Activated CD4-positive, alpha-beta memory T cell treated with anti-CD3 and anti-CD28 coated beads, Interleukin-2, amount 10 ng/mL, durations not matched to agents 7 days and 5 days (primary cell): ENCODE measurements at regions of chr7 and their contacts with region 1.

Region 1: DNA sequence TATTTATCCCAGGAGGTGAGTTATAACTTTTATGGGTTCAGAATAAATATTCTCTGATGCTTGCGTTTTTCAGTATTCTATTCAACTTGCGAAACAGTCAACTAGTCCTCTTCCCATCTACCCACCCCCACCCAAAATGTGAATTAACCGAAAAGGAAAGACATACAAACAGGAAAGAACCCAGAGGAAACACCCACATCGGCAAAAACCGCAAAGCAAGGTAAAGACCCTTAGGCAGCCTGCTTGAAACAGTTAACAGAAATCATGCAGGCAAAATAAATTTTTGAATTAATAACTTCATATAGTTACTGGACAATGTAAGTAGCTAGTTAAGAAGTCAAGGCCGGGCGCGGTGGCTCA is 5.4 kb downstream of the ZC3HAV1 start:
- DNase-seq: peak; percentile 54
- H3K4me3 Mint-ChIP-seq: peak overlapping the region; percentile 92
- H3K27ac Mint-ChIP-seq: peak overlapping the region; percentile 90
- H3K4me1 Mint-ChIP-seq: peaks cover 24% of the 10 kb centered on the region
- H3K27me3 Mint-ChIP-seq: no peaks in the 10 kb centered on the region

Region 2: DNA sequence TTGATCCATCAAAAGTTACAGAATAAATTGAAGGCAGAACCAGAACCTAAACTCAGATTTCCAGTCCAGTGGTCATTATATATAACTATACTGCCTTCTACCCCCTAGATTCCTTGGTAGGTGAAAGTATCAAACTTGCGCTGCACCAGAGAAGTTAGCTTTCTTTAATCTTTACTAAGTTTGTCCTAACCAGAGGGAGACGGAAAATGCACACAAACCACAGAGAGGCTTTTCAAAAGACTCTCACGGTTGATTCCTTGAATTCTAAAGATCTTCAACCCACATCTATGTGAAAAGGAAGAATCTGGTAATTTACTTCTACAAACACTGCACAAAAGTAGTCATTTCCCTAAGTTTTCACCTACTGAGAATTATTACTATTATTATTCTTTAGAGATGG is 104.7 kb before region 1 on chr7:
- CTCF ChIA-PET with region 1: no interaction called
- POLR2A ChIA-PET with region 1: no interaction called
- DNase-seq: no peak
- H3K4me3 Mint-ChIP-seq: no peak overlapping the region
- H3K27ac Mint-ChIP-seq: no peak overlapping the region
- H3K4me1 Mint-ChIP-seq: peaks cover 5% of the 10 kb centered on the region
- H3K27me3 Mint-ChIP-seq: peaks cover 28% of the 10 kb centered on the region

Region 3: DNA sequence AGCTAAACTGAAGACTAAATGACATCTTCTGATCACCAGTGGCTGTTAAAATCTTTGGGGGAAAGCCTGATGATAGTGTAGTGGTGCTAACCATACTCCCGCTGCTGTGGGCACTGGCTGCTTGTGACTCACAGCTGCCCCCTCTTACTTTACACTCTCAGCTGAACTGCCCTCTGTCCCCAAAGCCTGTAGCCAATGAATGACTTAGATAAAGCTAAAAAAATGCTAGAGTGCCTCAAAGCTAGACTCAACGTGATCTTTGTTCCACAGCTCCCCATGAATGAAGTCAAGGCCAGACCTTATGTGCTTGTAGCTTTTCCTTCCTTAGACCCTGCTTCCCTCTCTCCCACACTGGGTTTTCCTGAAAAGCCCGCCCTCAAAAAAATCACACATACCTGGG is 74.7 kb before region 1 on chr7:
- CTCF ChIA-PET with region 1: no interaction called
- POLR2A ChIA-PET with region 1: no interaction called
- DNase-seq: peak; percentile 2
- H3K4me3 Mint-ChIP-seq: no peak overlapping the region
- H3K27ac Mint-ChIP-seq: no peak overlapping the region
- H3K4me1 Mint-ChIP-seq: peaks cover 19% of the 10 kb centered on the region
- H3K27me3 Mint-ChIP-seq: no peaks in the 10 kb centered on the region

Region 4: DNA sequence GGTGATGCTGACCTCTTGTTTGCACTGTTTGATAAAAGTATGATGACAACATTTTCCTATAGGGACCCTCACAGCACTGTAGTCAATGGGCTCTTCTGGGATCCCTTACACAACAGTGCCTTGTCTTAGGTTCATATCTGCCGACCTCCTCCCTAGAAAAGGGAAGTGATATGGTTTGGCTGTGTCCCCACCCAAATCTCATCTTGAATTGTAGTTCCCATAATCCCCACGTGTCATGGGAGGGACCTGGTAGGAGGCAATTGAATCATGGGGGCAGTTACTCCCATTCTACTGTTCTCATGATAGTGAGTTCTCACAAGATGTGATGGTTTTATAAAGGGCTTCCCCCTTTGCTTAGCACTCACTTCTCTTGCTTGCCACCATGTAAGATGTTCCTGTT is 17.6 kb before region 1 on chr7:
- CTCF ChIA-PET with region 1: interaction called, 4 read pairs
- POLR2A ChIA-PET with region 1: interaction called, 29 read pairs
- DNase-seq: no peak
- H3K4me3 Mint-ChIP-seq: no peak overlapping the region
- H3K27ac Mint-ChIP-seq: peak overlapping the region; percentile 32
- H3K4me1 Mint-ChIP-seq: peaks cover 88% of the 10 kb centered on the region
- H3K27me3 Mint-ChIP-seq: no peaks in the 10 kb centered on the region

Region 5: DNA sequence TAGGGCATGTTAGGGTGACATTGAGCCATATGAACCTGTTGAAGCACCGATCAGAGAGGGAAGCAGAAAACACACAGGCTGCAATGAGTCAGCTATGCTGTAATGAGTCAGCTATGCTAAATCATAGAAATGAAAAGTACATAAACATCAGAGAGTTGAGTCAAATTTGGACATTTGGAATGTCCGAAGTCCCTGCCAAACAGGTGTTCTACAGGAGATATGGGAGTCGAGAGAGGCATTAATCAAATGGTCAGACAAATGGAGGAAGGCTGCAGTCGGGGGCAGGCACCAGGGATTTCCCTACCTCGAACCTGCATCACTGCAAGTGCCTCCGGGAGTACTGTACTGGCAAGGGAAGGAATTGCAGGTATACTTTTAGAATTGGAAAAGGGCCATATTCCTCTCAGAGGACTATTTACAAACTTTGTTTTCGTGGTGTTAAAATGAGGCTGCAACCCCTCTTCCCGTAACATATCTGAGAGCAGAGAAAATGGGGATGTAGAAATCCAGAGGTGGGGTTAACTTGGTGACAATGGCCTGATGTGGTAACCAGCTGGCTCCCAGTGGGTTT is 14.2 kb after region 1 on chr7:
- CTCF ChIA-PET with region 1: no interaction called
- POLR2A ChIA-PET with region 1: interaction called, 22 read pairs
- DNase-seq: peak; percentile 57
- H3K4me3 Mint-ChIP-seq: peak overlapping the region; percentile 56
- H3K27ac Mint-ChIP-seq: peak overlapping the region; percentile 56
- H3K4me1 Mint-ChIP-seq: peaks cover 31% of the 10 kb centered on the region
- H3K27me3 Mint-ChIP-seq: no peaks in the 10 kb centered on the region